K562 (cell line): ENCODE measurements at regions of chr1 and their contacts with region 1.

Region 1: DNA sequence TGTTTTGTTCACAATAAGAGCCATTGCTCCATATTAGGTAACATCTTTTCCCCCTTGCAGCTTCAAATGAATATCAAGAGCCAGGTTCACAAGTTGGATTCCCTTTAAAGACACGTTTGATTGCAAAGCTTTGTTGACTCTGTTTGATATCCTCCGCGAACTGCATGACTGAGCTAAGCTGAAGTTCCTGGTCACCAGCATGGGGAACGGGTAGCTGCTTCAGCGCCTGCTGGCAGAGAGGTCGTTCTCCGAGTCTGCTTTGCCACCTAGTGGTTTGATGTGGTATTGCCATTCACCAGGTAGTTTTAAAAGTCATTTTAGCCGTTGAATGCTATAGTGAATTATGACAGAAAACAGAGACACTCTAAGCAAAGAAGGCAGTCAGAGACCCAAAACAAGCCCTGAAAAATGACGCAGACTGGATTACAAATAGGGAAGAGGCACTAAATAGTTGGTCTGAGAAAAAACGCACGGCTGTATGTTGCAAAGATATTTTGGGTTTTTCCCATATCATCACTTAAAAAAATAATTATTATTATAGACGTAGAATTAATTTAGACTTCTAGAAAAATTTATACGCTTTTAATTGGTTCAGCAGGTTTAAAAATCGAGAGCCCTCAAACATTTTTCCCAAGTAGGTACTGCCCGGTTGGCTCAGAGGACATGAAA is 193.5 kb upstream of the FMN2 start:
- DNase-seq: peak; percentile 70 to 77 (median 75)
- ATAC-seq: peak; percentile 91
- H3K4me3 ChIP-seq: no peak overlapping the region
- H3K27ac ChIP-seq: no peak overlapping the region
- H3K4me1 ChIP-seq: no peaks in the 10 kb centered on the region
- H3K27me3 ChIP-seq: no peaks in the 10 kb centered on the region
- CTCF ChIP-seq: peak; percentile 83 to 92 (median 91)
- EP300 ChIP-seq: no peak
- POLR2A ChIP-seq: no peak
- RAD21 ChIP-seq: peak; percentile 87 to 88

Region 2: GRCh38 chr1:238242181-238242580 is 1656.0 kb before region 1 on chr1:
- CTCF ChIA-PET with region 1: interaction called, 5 read pairs
- POLR2A ChIA-PET with region 1: no interaction called
- in situ Hi-C with region 1: no loop called
- intact Hi-C with region 1: loop called (anchors 2 kb)
- DNase-seq: no peak
- ATAC-seq: no peak
- H3K4me3 ChIP-seq: no peak overlapping the region
- H3K27ac ChIP-seq: no peak overlapping the region
- H3K4me1 ChIP-seq: no peaks in the 10 kb centered on the region
- H3K27me3 ChIP-seq: no peaks in the 10 kb centered on the region
- CTCF ChIP-seq: no peak
- EP300 ChIP-seq: no peak
- POLR2A ChIP-seq: no peak
- RAD21 ChIP-seq: no peak

Region 3: DNA sequence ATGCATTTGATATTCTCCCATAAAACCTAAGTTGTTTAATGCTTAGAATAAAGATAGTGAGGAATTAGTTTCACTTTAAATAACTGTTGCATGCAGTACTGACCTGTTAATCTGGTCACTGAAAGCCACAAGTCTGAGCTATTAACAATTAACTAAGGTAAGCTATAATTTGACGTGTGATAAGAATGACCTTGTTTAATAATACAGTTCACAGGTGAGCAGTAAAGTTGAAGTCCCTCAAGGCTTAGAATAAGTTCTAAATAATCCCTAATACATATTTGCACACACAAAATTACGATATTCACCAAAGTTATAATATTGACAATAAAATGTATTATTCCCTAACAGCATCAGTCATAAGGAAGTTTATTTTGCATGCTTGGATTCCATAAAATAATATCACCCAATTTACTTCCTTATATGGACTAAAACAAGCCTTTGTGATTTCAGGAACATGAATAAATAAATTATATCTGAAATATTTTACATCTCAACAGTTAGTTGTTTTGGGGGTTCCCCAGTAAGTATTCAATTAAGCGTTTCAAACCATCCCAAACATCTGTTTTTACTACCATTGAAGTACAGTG is 582.5 kb before region 1 on chr1:
- CTCF ChIA-PET with region 1: no interaction called
- POLR2A ChIA-PET with region 1: no interaction called
- in situ Hi-C with region 1: no loop called
- intact Hi-C with region 1: loop called (anchors 10 kb)
- DNase-seq: no peak
- ATAC-seq: no peak
- H3K4me3 ChIP-seq: no peak overlapping the region
- H3K27ac ChIP-seq: no peak overlapping the region
- H3K4me1 ChIP-seq: no peaks in the 10 kb centered on the region
- H3K27me3 ChIP-seq: no peaks in the 10 kb centered on the region
- CTCF ChIP-seq: no peak
- EP300 ChIP-seq: no peak
- POLR2A ChIP-seq: no peak
- RAD21 ChIP-seq: no peak

Region 4: DNA sequence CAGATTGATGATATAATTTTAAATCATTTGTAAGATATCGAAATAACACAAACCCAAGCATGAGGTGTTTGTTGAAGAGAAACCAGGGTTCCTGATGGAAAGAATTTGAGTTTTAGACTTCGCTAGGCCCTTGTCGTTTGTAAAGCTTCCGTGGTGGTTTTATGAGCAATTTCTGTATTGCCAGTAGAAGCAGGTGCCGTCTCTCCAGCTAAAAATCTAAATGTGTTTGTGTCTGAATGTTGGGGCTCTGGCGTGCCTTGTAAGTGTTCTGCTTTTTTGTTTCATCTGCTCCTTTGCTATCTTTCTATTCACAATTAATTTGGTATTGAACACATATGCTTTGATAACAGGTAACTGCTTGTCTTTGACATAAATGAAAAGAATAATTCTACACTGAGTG is 484.3 kb before region 1 on chr1:
- CTCF ChIA-PET with region 1: no interaction called
- POLR2A ChIA-PET with region 1: no interaction called
- in situ Hi-C with region 1: no loop called
- intact Hi-C with region 1: loop called (anchors 5 kb)
- DNase-seq: no peak
- ATAC-seq: no peak
- H3K4me3 ChIP-seq: no peak overlapping the region
- H3K27ac ChIP-seq: no peak overlapping the region
- H3K4me1 ChIP-seq: no peaks in the 10 kb centered on the region
- H3K27me3 ChIP-seq: no peaks in the 10 kb centered on the region
- CTCF ChIP-seq: no peak
- EP300 ChIP-seq: no peak
- POLR2A ChIP-seq: no peak
- RAD21 ChIP-seq: no peak